Heart right ventricle (tissue), 16 donors: ENCODE measurements at regions of chr14 and their contacts with region 1.

Region 1: GRCh38 chr14:65356327-65356852 is 56.1 kb upstream of the FUT8 start:
- DNase-seq: no peak
- ATAC-seq: peak in 1 of 8 donors; percentile 31
- H3K4me3 ChIP-seq: no peak overlapping the region
- H3K27ac ChIP-seq: no peak overlapping the region
- H3K4me1 ChIP-seq: peaks cover 0 to 26% (median 6%) of the 10 kb centered on the region in 9 donors
- H3K27me3 ChIP-seq: no peaks in the 10 kb centered on the region
- CTCF ChIP-seq: no peak

Region 2: DNA sequence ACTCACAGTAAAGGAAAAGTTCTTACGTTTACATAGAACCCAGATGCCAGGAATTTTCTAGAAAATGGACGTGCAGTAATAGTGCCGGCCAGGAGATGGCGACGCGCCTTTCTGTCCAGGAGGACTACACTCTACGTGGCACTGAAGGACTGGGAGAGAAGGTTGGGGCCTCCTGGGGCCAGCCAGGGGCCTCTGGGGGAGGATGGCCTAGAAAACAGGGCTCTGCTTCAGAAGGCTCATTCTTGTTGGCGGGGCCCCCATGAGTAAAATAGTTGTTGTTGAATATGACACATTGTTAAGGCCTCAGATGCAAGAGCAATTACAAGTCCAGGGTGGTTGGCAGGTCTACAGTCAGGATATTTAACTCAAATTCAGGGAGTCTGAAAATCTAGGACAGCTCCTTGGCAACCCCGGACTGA is 133.9 kb before region 1 on chr14:
- intact Hi-C with region 1: loop called in 1 of 10 experiments (anchors 10 kb)
- DNase-seq: peak; percentile 23 to 55
- ATAC-seq: peak in 7 of 8 donors; percentile 29 to 81 (median 79)
- H3K4me3 ChIP-seq: no peak overlapping the region
- H3K27ac ChIP-seq: peak overlapping the region in 1 of 10 donors; percentile 35
- H3K4me1 ChIP-seq: peaks cover 0 to 31% (median 13%) of the 10 kb centered on the region in 9 donors
- H3K27me3 ChIP-seq: no peaks in the 10 kb centered on the region
- CTCF ChIP-seq: peak; percentile 61 to 88 (median 76)